GM18951 (cell line): ENCODE measurements at regions of chr5 and their contacts with region 1.

Region 1: GRCh38 chr5:82641331-82642003 is 363.3 kb upstream of the RPS23 start:
- POLR2A ChIP-seq: no peak

Region 2: DNA sequence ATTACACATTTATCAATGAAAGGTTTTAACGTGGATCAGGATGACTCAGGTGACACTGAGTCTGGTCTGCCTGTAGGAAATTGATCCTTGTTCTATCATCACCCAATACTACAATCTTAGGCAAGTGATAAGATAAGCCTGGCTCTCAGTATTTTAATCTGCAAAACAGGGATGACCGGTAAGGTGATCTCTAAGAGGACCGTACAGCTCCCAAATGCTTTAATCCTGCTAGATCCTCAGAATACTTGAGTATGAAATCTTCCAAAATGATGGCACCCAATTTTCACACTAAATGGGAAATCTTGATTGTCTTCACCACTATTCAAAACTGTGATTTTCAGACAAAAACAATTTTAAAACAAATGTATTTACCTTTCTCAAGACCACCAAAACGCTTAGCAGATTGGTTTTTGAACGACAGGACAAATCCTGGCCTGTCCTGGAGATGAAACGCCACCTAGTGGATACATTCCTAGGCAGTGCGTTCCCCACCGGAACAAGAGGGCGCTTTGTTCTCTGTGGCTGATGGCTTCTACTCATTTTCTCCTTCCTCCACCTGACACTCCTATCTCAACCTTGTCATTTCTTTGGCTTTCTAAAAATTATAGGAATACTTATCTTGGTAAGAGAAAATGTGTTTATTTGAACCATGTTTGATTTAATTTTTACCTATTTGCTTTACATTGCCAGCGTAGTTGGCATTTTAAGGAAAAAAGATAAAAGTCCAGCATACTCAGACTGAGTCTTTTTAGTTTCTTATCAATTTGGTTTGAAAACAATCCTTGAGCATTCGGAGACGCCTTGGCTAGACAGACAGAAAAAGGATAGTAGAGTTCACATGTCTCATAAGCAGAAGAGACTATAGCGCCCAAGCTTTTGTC is 788.9 kb after region 1 on chr5:
- in situ Hi-C with region 1: loop called (anchors 25 kb)
- POLR2A ChIP-seq: no peak

Region 3: GRCh38 chr5:83564069-83564749 is 922.7 kb after region 1 on chr5:
- in situ Hi-C with region 1: loop called (anchors 25 kb)
- POLR2A ChIP-seq: no peak